Esophagus squamous epithelium (tissue), 5 donors: ENCODE measurements at regions of chr22 and their contacts with region 1.

Region 1: GRCh38 chr22:27405672-27406388 is 395.7 kb downstream of the MN1 start:
- DNase-seq: no peak
- H3K4me3 ChIP-seq: no peak overlapping the region
- H3K27ac ChIP-seq: no peak overlapping the region
- H3K4me1 ChIP-seq: no peaks in the 10 kb centered on the region
- H3K27me3 ChIP-seq: peaks cover 0 to 14% (median 0%) of the 10 kb centered on the region in 4 donors
- CTCF ChIP-seq: peak in 5 of 6 experiments; percentile 54 to 81 (median 64)
- POLR2A ChIP-seq: no peak

Region 2: DNA sequence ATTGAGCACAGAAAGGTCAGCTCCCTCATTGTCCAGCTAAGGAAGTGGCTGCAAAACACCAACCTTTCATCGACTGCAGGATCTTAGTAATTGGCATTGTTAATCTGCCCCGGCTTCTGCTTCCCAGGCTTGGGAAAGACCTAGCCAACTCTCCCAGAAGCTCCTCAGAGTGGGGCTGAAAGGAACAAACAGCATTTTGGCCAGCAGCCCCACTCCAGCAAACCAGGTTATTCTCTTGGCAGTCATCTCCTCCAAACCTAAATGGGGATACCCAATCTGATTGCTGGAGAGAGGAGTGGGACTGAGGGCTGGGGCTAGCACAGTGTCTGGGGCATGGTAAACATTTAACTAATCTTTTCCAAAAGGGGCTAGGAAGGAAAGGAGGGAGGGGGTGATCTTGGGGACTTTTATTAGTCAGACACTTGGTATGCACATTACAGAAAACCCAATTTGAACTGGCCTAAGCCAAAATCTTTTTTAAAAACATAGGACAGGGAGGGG is 101.3 kb after region 1 on chr22:
- intact Hi-C with region 1: no loop called
- DNase-seq: no peak
- H3K4me3 ChIP-seq: no peak overlapping the region
- H3K27ac ChIP-seq: no peak overlapping the region
- H3K4me1 ChIP-seq: peaks cover 4 to 23% (median 4%) of the 10 kb centered on the region in 3 donors
- H3K27me3 ChIP-seq: no peaks in the 10 kb centered on the region
- CTCF ChIP-seq: no peak
- POLR2A ChIP-seq: no peak

Region 3: GRCh38 chr22:27804470-27805297 is 398.9 kb after region 1 on chr22:
- intact Hi-C with region 1: loop called (anchors 10 kb)
- DNase-seq: no peak
- H3K4me3 ChIP-seq: no peak overlapping the region
- H3K27ac ChIP-seq: no peak overlapping the region
- H3K4me1 ChIP-seq: peaks cover 14 to 45% (median 20%) of the 10 kb centered on the region in 3 donors
- H3K27me3 ChIP-seq: peaks cover 0 to 14% (median 0%) of the 10 kb centered on the region in 4 donors
- CTCF ChIP-seq: peak in 5 of 6 experiments; percentile 45 to 74 (median 62)
- POLR2A ChIP-seq: no peak

Region 4: GRCh38 chr22:27990879-27991278 is 585.0 kb after region 1 on chr22:
- intact Hi-C with region 1: loop called (anchors 10 kb)
- DNase-seq: no peak
- H3K4me3 ChIP-seq: no peak overlapping the region
- H3K27ac ChIP-seq: peak overlapping the region; percentile 3 to 66 (median 50)
- H3K4me1 ChIP-seq: peaks cover 2 to 12% (median 4%) of the 10 kb centered on the region in 3 donors
- H3K27me3 ChIP-seq: no peaks in the 10 kb centered on the region
- CTCF ChIP-seq: peak in 4 of 6 experiments; percentile 9 to 37 (median 28)
- POLR2A ChIP-seq: no peak